Esophagus muscularis mucosa (tissue), 4 donors: ENCODE measurements at regions of chr5 and their contacts with region 1.

Region 1: GRCh38 chr5:69042915-69043658 is 50.7 kb upstream of the SLC30A5 start:
- DNase-seq: peak; percentile 93
- H3K4me3 ChIP-seq: peak overlapping the region; percentile 53 to 61 (median 56)
- H3K27ac ChIP-seq: peak overlapping the region; percentile 42 to 80 (median 72)
- H3K4me1 ChIP-seq: peaks cover 0 to 15% (median 4%) of the 10 kb centered on the region in 4 donors
- H3K27me3 ChIP-seq: no peaks in the 10 kb centered on the region
- CTCF ChIP-seq: peak; percentile 88
- EP300 ChIP-seq: no peak
- POLR2A ChIP-seq: no peak

Region 2: GRCh38 chr5:69083412-69083811 is 40.3 kb after region 1 on chr5:
- intact Hi-C with region 1: no loop called
- DNase-seq: no peak
- H3K4me3 ChIP-seq: no peak overlapping the region
- H3K27ac ChIP-seq: no peak overlapping the region
- H3K4me1 ChIP-seq: no peaks in the 10 kb centered on the region
- H3K27me3 ChIP-seq: no peaks in the 10 kb centered on the region
- CTCF ChIP-seq: no peak
- EP300 ChIP-seq: no peak
- POLR2A ChIP-seq: no peak

Region 3: DNA sequence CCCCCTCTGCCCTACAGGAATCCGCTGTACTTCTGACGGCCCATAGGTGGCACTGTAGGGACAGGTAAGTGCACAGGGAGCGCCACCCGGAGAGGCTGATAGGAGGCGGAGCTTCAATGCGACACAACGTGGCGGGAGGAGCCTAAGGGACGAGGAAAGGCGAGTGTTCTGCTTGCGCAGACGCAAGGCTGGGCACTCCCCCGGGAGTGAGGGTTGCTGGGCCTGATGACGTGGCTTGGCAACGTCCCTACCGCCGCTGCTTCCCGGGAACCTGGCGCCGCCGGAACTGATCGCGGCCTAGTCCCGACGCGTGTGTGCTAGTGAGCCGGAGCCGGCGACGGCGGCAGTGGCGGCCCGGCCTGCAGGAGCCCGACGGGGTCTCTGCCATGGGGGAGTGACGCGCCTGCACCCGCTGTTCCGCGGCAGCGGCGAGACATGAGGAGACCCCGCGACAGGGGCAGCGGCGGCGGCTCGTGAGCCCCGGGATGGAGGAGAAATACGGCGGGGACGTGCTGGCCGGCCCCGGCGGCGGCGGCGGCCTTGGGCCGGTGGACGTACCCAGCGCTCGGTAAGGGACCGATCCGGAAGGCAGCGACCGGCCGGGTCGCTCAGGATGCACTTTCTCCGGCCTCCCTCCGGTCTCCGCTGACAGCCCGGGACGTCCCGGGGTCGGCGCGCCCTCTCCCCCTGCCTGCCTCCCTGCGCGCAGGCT is 50.8 kb after region 1 on chr5 and contains the start of gene SLC30A5:
- intact Hi-C with region 1: loop called (anchors 5 kb)
- DNase-seq: peak; percentile 99
- H3K4me3 ChIP-seq: peak within 1 kb of the TSS; percentile 72 to 95 (median 86)
- H3K27ac ChIP-seq: peak within 1 kb of the TSS; percentile 94 to 97 (median 96)
- H3K4me1 ChIP-seq: peaks cover 13 to 30% (median 27%) of the 10 kb centered on the region in 4 donors
- H3K27me3 ChIP-seq: no peaks in the 10 kb centered on the region
- CTCF ChIP-seq: peak; percentile 90 to 96 (median 91)
- EP300 ChIP-seq: no peak
- POLR2A ChIP-seq: no peak
- total RNA-seq, gene SLC30A5: 29.2 to 35.1 (median 32.5) TPM